Dendritic cell treated with granulocyte-macrophage colony-stimulating factor and Interleukin-4, amounts not matched to agents 40 ng/mL and 50 ng/mL, for 4 days (primary cell): ENCODE measurements at regions of chr2 and their contacts with region 1.

Region 1: DNA sequence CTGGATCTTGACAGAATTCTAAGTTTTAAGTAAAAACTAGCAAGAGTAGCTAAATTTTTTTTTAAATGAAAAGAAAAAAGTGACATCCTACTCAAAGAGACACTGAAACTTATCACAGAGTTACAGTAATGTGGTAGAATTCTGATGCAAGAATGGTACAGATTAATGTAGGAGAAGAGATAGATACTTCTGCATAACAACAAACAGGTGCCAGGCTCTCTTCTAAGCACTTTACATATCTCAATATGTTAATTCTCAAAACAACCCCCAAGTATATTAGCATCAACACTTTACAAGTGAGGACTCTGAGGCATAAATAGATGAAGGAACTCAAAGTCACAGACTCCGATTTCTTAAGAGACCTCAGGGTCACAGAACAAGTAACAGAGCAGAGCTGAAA is 28.1 kb downstream of the GCC2 start:
- H3K4me3 Mint-ChIP-seq: no peak overlapping the region
- H3K27ac Mint-ChIP-seq: no peak overlapping the region
- H3K4me1 Mint-ChIP-seq: no peaks in the 10 kb centered on the region
- H3K27me3 Mint-ChIP-seq: no peaks in the 10 kb centered on the region

Region 2: GRCh38 chr2:108691447-108691846 is 214.3 kb after region 1 on chr2:
- intact Hi-C with region 1: loop called (anchors 10 kb)
- H3K4me3 Mint-ChIP-seq: no peak overlapping the region
- H3K27ac Mint-ChIP-seq: no peak overlapping the region
- H3K4me1 Mint-ChIP-seq: no peaks in the 10 kb centered on the region
- H3K27me3 Mint-ChIP-seq: no peaks in the 10 kb centered on the region

Region 3: DNA sequence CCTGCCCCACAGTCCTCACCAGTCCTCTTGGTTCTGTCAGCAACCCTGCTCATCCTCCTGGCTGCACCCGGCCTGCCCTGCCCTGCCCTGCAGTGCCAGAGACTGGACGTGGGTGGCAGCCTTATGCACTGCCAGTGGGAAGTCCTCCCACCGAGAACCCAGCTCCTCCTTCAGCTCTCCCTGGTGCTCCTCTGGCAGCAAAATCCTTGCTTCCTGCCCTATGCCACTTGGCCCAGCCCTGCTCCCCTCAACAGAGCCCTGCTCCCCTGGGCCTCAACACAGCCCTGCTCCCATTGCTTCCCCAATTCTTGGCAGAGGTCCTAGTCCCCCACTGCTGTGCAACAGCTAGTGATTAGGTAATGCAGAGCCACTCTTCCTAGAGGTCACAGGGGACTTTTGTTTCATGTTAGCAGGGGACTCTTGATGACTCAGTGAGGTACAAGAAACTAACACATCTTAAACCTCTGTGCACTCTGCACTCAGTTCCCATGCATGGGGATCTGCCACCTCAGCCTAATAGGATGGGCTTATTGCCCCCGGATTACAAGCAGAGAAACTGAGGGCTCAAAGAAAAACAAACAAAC is 569.9 kb after region 1 on chr2:
- intact Hi-C with region 1: no loop called
- H3K4me3 Mint-ChIP-seq: no peak overlapping the region
- H3K27ac Mint-ChIP-seq: no peak overlapping the region
- H3K4me1 Mint-ChIP-seq: peaks cover 6% of the 10 kb centered on the region
- H3K27me3 Mint-ChIP-seq: no peaks in the 10 kb centered on the region

Region 4: GRCh38 chr2:109135359-109136197 is 658.5 kb after region 1 on chr2:
- intact Hi-C with region 1: no loop called
- H3K4me3 Mint-ChIP-seq: no peak overlapping the region
- H3K27ac Mint-ChIP-seq: no peak overlapping the region
- H3K4me1 Mint-ChIP-seq: no peaks in the 10 kb centered on the region
- H3K27me3 Mint-ChIP-seq: peaks cover 33% of the 10 kb centered on the region